ENCODE measurements at regions of chr1 and their contacts with region 1.

Region 1: DNA sequence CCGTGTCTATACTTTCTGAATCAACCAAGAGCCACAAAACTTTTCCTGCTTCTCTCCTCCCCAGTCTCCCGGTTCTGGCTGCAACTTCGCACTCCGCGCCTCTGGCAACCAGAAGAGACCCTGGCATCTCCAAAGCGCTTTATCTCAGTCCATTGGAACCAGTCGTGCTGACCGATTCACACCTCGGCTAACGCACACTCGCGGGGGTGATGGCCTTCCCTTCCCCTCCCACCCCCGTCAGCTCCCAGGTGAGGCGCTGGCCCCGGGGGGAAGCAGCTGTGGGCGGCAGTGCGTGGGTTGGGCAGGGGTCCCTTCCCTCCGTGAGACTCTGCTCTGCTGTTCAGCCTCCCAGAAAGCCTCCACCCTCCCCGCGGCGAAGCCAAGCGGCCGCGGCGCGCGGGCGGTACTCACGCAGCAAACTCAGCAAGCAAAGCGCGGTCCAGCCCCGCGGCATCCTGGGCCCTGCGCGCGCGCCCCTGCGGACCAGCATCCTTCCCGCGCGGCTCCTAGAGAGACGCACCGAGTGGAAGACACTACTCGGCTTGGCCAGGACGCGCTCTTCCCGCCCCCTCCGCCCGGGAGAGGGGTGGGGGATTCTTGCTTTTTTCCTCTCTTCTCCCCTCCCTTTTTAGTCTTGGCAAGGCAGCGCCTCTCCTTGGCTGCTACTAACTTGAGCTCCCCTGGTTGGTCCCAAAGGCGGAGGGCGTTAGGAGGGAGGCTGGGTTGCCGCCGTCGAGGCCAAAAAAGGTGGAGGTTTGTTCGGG is at the start of gene CD34:
- DNase-seq: peak in 1 of 2 donors; percentile 82
- H3K4me3 ChIP-seq: peak within 1 kb of the TSS; percentile 52 to 60
- H3K27ac ChIP-seq: peak within 1 kb of the TSS; percentile 61 to 85
- H3K4me1 ChIP-seq: peaks cover 0 to 3% of the 10 kb centered on the region in 2 donors
- H3K27me3 ChIP-seq: no peaks in the 10 kb centered on the region
- CTCF ChIP-seq: no peak
- total RNA-seq, gene CD34: 142 TPM

Region 2: GRCh38 chr1:207897188-207897587 is 13.6 kb before region 1 on chr1:
- intact Hi-C with region 1: loop called (anchors 2 kb)
- DNase-seq: no peak
- H3K4me3 ChIP-seq: no peak overlapping the region
- H3K27ac ChIP-seq: peak overlapping the region; percentile 61 to 62
- H3K4me1 ChIP-seq: peaks cover 0 to 5% of the 10 kb centered on the region in 2 donors
- H3K27me3 ChIP-seq: no peaks in the 10 kb centered on the region
- CTCF ChIP-seq: peak in 2 of 3 experiments; percentile 25 to 39

Region 3: GRCh38 chr1:207959141-207959825 is 48.5 kb after region 1 on chr1:
- intact Hi-C with region 1: no loop called
- DNase-seq: peak; percentile 38 to 94
- H3K4me3 ChIP-seq: peak overlapping the region; percentile 64 to 73
- H3K27ac ChIP-seq: peak overlapping the region; percentile 92
- H3K4me1 ChIP-seq: peaks cover 0 to 27% of the 10 kb centered on the region in 2 donors
- H3K27me3 ChIP-seq: no peaks in the 10 kb centered on the region
- CTCF ChIP-seq: peak in 1 of 3 experiments; percentile 28

Measured in ascending aorta (tissue), 2 donors.